ENCODE measurements at regions of chr14 and their contacts with region 1.

Region 1: GRCh38 chr14:24605435-24606190 is 3.9 kb downstream of the GZMH start:
- DNase-seq: peak; percentile 25
- H3K4me3 ChIP-seq: no peak overlapping the region
- H3K27ac ChIP-seq: no peak overlapping the region
- H3K4me1 ChIP-seq: no peaks in the 10 kb centered on the region
- H3K27me3 ChIP-seq: no peaks in the 10 kb centered on the region
- CTCF ChIP-seq: peak; percentile 95 to 97

Region 2: DNA sequence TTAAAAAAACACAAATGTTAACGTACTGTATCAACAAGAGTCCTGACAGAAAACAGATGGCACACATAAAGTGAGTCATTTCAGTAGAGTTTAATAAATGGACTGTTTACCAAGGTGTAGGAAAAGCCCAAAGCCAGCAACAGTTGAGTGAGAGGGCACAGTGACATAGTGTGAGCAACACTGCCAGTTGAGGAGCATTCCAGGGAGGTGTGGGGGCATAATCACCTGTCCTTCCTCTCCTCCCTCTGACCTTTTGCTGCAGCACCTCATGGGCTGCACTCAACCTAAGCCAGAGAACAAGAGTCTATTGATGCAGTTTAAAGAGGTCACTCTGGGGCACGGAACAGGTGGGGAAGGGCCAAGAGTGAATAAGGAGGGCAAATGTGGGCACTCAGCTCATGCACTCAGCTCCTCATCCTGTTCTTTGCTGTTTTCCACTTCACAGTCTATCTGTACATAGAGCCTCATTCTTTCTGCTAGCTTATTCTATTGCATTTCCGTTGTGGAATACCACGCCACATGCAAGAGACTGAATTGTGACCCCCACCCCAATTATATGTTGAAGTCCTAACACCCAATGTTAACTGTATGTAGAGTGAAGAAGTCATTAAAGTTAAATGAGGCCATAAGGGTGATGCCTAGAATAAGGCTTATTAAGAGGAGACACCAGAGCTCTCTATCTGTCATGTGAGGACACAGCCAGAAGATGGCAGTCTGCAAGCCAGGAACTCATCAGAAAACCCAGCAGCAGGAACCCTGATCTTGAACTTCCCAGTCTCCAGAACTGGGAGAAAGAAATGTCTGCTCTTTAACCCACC is 940.0 kb before region 1 on chr14:
- CTCF ChIA-PET with region 1: no interaction called
- dilution Hi-C with region 1: no loop called
- in situ Hi-C with region 1: no loop called
- intact Hi-C with region 1: no loop called
- DNase-seq: peak; percentile 27
- H3K4me3 ChIP-seq: no peak overlapping the region
- H3K27ac ChIP-seq: no peak overlapping the region
- H3K4me1 ChIP-seq: peaks cover 17% of the 10 kb centered on the region
- H3K27me3 ChIP-seq: no peaks in the 10 kb centered on the region
- CTCF ChIP-seq: peak; percentile 65 to 76

Region 3: DNA sequence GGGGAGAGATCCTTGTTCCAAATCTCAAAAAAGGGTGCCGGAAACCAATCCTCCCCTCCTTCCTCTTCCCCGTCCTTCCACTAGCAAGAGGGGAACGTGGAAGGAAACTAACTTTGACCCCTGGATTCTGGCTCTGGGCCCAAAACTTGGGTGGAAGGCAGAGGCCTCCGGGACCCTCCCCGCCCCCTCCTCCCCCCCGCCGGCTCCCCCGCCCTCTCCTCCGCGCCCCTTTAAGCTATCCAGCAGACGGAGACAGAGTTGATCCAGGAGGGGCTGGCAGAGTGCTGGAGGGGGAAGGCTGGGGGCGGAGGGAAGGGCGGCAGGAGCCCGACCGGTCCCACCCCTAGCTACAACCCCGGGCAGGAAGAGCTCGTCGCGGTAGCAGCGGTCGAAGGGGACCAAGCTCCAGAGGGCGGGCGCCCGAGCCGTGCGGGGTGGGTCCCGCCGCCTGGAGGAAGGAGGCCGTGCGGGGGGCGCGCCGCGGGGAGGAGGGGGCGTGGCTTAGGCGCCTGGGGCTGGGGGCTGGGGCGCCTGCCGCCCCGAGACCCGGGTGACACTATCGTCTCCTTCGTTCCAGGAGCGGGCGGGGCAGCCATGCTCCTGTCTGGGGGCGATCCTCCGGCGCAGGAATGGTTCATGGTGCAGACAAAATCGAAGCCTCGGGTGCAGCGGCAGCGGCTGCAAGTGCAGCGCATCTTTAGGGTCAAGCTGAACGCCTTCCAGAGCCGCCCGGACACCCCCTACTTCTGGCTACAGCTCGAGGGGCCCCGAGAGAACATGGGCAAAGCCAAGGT is 206.8 kb before region 1 on chr14 and contains the start of gene NYNRIN:
- CTCF ChIA-PET with region 1: no interaction called
- dilution Hi-C with region 1: no loop called
- in situ Hi-C with region 1: no loop called
- intact Hi-C with region 1: no loop called
- DNase-seq: no peak
- H3K4me3 ChIP-seq: peak within 1 kb of the TSS in 2 of 3 experiments; percentile 28 to 44
- H3K27ac ChIP-seq: no peak within 1 kb of the TSS
- H3K4me1 ChIP-seq: peaks cover 25% of the 10 kb centered on the region
- H3K27me3 ChIP-seq: no peaks in the 10 kb centered on the region
- CTCF ChIP-seq: no peak
- total RNA-seq, gene NYNRIN: 2.7 to 15.0 TPM

Region 4: GRCh38 chr14:24481622-24482324 is 123.8 kb before region 1 on chr14:
- CTCF ChIA-PET with region 1: no interaction called
- dilution Hi-C with region 1: no loop called
- in situ Hi-C with region 1: no loop called
- intact Hi-C with region 1: loop called (anchors 5 kb)
- DNase-seq: peak; percentile 33
- H3K4me3 ChIP-seq: no peak overlapping the region
- H3K27ac ChIP-seq: no peak overlapping the region
- H3K4me1 ChIP-seq: peaks cover 8% of the 10 kb centered on the region
- H3K27me3 ChIP-seq: no peaks in the 10 kb centered on the region
- CTCF ChIP-seq: peak; percentile 83